Endothelial cell of umbilical vein (primary cell): ENCODE measurements at regions of chr7 and their contacts with region 1.

Region 1: GRCh38 chr7:12123172-12123571 is 87.9 kb upstream of the TMEM106B start:
- DNase-seq: no peak
- H3K4me3 ChIP-seq: no peak overlapping the region
- H3K27ac ChIP-seq: no peak overlapping the region
- H3K4me1 ChIP-seq: no peaks in the 10 kb centered on the region
- H3K27me3 ChIP-seq: peaks cover 0 to 5% of the 10 kb centered on the region in 2 experiments
- CTCF ChIP-seq: no peak
- POLR2A ChIP-seq: no peak

Region 2: DNA sequence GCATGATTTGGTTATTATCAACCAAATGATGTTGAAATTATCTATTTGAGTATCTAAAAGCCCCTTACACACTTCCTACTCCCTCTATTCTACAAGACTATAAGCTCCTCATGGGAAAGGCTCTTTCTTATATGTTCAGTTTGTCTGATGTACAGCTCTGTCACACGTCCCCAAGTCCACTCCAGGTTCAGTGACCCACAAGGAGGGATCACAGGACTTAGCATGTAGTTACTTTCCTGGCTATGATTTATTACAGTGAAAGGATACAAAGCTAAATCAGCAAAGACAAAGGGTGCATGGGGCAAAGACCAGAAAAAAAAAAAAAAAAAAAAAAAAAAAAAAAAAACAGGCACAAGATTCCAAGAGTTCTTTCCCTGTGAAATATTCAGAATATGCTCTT is 37.7 kb before region 1 on chr7:
- CTCF ChIA-PET with region 1: no interaction called
- POLR2A ChIA-PET with region 1: no interaction called
- dilution Hi-C with region 1: no loop called
- intact Hi-C with region 1: loop called (anchors 1 kb)
- DNase-seq: no peak
- H3K4me3 ChIP-seq: no peak overlapping the region
- H3K27ac ChIP-seq: no peak overlapping the region
- H3K4me1 ChIP-seq: no peaks in the 10 kb centered on the region
- H3K27me3 ChIP-seq: no peaks in the 10 kb centered on the region
- CTCF ChIP-seq: no peak
- POLR2A ChIP-seq: no peak

Region 3: GRCh38 chr7:12436896-12437535 is 313.8 kb after region 1 on chr7:
- CTCF ChIA-PET with region 1: no interaction called
- POLR2A ChIA-PET with region 1: no interaction called
- dilution Hi-C with region 1: no loop called
- intact Hi-C with region 1: no loop called
- DNase-seq: no peak
- H3K4me3 ChIP-seq: no peak overlapping the region
- H3K27ac ChIP-seq: no peak overlapping the region
- H3K4me1 ChIP-seq: no peaks in the 10 kb centered on the region
- H3K27me3 ChIP-seq: peaks cover 6 to 8% of the 10 kb centered on the region in 2 experiments
- CTCF ChIP-seq: no peak
- POLR2A ChIP-seq: no peak